Mammary epithelial cell (primary cell): ENCODE measurements at regions of chr9 and their contacts with region 1.

Region 1: GRCh38 chr9:117073539-117074341 is 341.1 kb downstream of the ASTN2 start:
- DNase-seq: peak; percentile 16
- H3K4me3 ChIP-seq: peak overlapping the region in 1 of 3 experiments; percentile 13
- H3K27ac ChIP-seq: no peak overlapping the region
- H3K4me1 ChIP-seq: peaks cover 8% of the 10 kb centered on the region
- H3K27me3 ChIP-seq: no peaks in the 10 kb centered on the region
- CTCF ChIP-seq: peak; percentile 69 to 80

Region 2: DNA sequence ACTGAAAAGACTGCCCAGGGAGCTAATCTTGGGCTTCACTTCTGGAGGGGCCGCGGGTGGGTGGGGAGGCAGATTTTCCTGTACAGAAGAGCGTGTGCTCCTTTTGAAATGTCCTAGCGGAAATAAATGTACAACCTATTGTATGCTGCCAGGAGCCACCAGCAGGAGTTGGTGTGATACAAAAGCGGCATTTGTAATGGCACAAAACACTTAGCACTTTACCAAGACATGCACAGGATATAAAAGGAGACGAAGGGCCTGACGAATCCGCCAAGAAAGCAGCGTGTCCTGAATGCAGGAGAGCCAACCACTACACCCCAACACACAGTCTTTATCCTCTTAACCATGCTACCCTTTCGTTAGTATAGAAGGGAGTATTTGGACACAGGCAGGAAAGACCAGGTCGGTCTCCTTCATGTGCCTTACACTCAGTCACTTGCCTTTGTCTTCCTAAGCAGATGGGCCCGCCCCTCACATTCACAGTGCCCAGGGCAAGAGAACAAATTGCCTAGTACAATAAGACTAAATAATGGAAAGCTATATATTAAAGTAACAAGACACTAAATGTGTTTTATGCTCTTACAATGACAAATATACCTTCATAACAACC is 168.5 kb before region 1 on chr9:
- CTCF ChIA-PET with region 1: no interaction called
- dilution Hi-C with region 1: no loop called
- in situ Hi-C with region 1: no loop called
- intact Hi-C with region 1: loop called (anchors 5 kb)
- DNase-seq: no peak
- H3K4me3 ChIP-seq: no peak overlapping the region
- H3K27ac ChIP-seq: no peak overlapping the region
- H3K4me1 ChIP-seq: no peaks in the 10 kb centered on the region
- H3K27me3 ChIP-seq: no peaks in the 10 kb centered on the region
- CTCF ChIP-seq: no peak

Region 3: GRCh38 chr9:117160254-117160653 is 86.5 kb after region 1 on chr9:
- CTCF ChIA-PET with region 1: no interaction called
- dilution Hi-C with region 1: no loop called
- in situ Hi-C with region 1: no loop called
- intact Hi-C with region 1: loop called (anchors 2 kb)
- DNase-seq: no peak
- H3K4me3 ChIP-seq: no peak overlapping the region
- H3K27ac ChIP-seq: no peak overlapping the region
- H3K4me1 ChIP-seq: no peaks in the 10 kb centered on the region
- H3K27me3 ChIP-seq: no peaks in the 10 kb centered on the region
- CTCF ChIP-seq: peak; percentile 36 to 51

Region 4: GRCh38 chr9:117354244-117354847 is 280.6 kb after region 1 on chr9:
- CTCF ChIA-PET with region 1: no interaction called
- dilution Hi-C with region 1: no loop called
- in situ Hi-C with region 1: no loop called
- intact Hi-C with region 1: loop called (anchors 10 kb)
- DNase-seq: no peak
- H3K4me3 ChIP-seq: no peak overlapping the region
- H3K27ac ChIP-seq: no peak overlapping the region
- H3K4me1 ChIP-seq: no peaks in the 10 kb centered on the region
- H3K27me3 ChIP-seq: no peaks in the 10 kb centered on the region
- CTCF ChIP-seq: no peak

Region 5: DNA sequence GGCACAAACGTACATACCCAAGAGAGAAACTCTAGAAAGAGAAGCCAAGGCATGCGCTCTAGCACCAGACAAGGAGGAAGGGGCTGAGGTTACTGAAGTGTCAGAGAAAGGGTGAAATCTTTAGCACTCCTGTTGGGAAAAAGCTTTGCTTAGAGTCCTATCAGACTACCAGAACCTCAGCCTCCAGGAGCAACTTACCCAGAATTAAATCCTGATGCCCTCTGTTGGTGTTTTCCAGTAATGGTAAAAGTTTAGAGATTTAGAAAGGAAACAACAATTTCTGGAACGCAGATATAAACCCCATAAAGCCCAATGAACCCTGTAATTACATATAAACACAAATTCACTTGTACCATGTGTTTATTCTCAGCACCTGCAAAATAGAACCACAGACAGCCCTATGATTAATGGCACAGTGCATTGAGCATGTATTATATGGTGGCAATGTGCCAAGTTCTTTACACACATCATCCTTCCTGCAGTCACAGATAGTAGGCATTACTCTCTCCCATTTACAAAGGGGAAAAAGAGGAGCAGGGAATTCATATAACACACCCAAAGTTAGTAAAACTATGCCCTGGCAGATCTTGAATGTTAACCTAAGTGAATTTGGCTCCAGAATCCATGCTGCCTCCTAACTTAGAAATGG is 374.4 kb after region 1 on chr9:
- CTCF ChIA-PET with region 1: no interaction called
- dilution Hi-C with region 1: no loop called
- in situ Hi-C with region 1: no loop called
- intact Hi-C with region 1: loop called (anchors 2 kb)
- DNase-seq: no peak
- H3K4me3 ChIP-seq: no peak overlapping the region
- H3K27ac ChIP-seq: no peak overlapping the region
- H3K4me1 ChIP-seq: no peaks in the 10 kb centered on the region
- H3K27me3 ChIP-seq: peaks cover 2% of the 10 kb centered on the region
- CTCF ChIP-seq: peak in 1 of 2 donors; percentile 21

Region 6: DNA sequence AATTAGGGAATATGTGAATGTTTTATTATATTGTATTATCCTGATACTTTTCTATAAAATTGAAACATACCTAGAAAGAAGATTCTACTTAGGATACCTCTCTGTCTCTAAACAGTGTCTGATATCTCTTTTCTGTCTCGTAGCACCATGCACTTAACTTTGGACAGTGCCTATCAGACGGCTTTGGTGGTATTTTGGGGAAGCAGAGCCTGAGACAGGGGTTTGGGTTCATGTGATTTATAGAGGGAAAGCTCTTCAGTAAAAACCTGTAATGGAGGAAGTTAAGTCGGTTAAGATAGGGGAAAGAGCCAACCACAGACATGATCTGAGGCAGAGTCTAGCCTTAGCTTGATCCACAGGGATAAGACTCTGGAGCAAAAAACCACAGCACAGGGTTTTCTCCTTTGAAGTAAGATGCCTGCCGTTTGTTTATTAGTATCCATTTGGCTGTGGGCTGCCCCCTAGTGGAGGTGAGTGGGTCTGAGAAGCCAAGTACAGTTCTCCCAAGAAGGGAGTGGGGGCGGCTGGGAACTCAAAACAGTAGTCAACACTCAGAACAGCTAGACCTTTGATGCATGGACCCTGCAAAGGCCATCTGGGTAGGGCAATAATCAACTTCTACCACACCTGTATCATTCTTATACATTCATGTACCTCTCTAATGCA is 482.4 kb after region 1 on chr9:
- CTCF ChIA-PET with region 1: no interaction called
- dilution Hi-C with region 1: no loop called
- in situ Hi-C with region 1: no loop called
- intact Hi-C with region 1: loop called (anchors 2 kb)
- DNase-seq: peak; percentile 40
- H3K4me3 ChIP-seq: no peak overlapping the region
- H3K27ac ChIP-seq: no peak overlapping the region
- H3K4me1 ChIP-seq: no peaks in the 10 kb centered on the region
- H3K27me3 ChIP-seq: no peaks in the 10 kb centered on the region
- CTCF ChIP-seq: peak; percentile 77 to 79